ENCODE measurements at regions of chr19 and their contacts with region 1.

Region 1: GRCh38 chr19:5048091-5048726 is 79.3 kb downstream of the KDM4B start:
- DNase-seq: peak; percentile 88
- H3K4me3 Mint-ChIP-seq: no peak overlapping the region
- H3K27ac Mint-ChIP-seq: no peak overlapping the region
- H3K4me1 Mint-ChIP-seq: peaks cover 2% of the 10 kb centered on the region
- H3K27me3 Mint-ChIP-seq: no peaks in the 10 kb centered on the region

Region 2: DNA sequence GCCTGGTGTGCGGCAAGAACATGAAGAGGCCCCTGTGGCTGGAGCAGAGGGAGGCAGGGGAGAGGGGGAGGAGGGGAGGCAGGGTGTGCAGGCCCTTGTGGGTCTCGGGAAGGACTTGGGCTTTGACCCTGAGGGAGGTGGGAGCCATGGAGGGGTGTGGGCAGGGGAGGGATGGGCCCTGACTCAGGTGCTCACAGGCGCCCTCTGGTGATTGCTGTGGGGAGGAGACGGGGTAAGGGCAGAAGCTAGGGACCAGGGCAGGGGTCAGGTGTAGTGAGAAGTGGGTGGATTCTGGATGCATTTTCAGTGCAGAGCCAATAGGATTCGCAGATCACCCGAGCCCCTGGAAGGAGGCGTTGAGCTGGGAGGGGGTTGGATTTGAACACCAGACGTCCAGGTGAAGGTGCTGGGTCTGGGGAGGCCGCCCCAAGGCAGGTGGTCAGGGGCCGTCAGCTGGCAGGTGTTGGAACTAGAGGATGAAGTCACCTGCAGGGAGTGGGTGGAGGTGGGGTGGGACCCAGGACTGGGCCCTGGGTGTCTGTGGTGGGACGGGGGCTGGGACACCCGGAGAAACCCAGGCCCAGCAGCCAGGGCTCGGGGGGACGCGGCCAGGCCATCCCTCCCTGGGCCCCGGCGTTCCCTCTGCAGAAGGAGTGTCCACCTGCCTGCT is 106.1 kb after region 1 on chr19:
- intact Hi-C with region 1: loop called (anchors 5 kb)
- DNase-seq: peak; percentile 78
- H3K4me3 Mint-ChIP-seq: no peak overlapping the region
- H3K27ac Mint-ChIP-seq: no peak overlapping the region
- H3K4me1 Mint-ChIP-seq: no peaks in the 10 kb centered on the region
- H3K27me3 Mint-ChIP-seq: no peaks in the 10 kb centered on the region

Region 3: GRCh38 chr19:5452594-5453565 is 404.7 kb after region 1 on chr19:
- intact Hi-C with region 1: no loop called
- DNase-seq: no peak
- H3K4me3 Mint-ChIP-seq: no peak overlapping the region
- H3K27ac Mint-ChIP-seq: no peak overlapping the region
- H3K4me1 Mint-ChIP-seq: no peaks in the 10 kb centered on the region
- H3K27me3 Mint-ChIP-seq: no peaks in the 10 kb centered on the region

Region 4: DNA sequence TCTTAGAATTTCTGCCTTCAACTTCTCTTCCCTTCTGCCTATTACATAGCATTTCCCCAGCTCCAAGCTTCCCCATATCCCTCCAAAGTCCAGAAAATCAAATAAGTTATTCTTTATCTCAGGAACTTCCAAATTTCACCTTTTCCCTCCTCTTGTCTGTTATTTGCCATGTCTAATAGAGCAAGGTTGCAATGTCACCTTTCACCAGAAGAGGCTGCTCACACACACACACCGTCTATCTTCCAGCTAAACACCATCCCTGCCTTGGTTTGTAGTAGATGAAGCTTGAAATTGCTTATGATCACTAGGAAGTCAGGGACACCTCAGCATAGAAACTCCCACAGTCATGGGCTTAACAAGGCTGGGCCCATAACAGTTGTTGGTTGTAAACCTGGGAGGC is 455.4 kb after region 1 on chr19:
- intact Hi-C with region 1: no loop called
- DNase-seq: no peak
- H3K4me3 Mint-ChIP-seq: no peak overlapping the region
- H3K27ac Mint-ChIP-seq: no peak overlapping the region
- H3K4me1 Mint-ChIP-seq: no peaks in the 10 kb centered on the region
- H3K27me3 Mint-ChIP-seq: no peaks in the 10 kb centered on the region